ENCODE measurements at regions of chr7 and their contacts with region 1.

Region 1: GRCh38 chr7:131302876-131303707 is 24.6 kb upstream of the MKLN1 start:
- ATAC-seq: peak in 2 of 8 experiments; percentile 23 to 24
- H3K4me3 ChIP-seq: no peak overlapping the region
- H3K27ac ChIP-seq: no peak overlapping the region
- H3K4me1 ChIP-seq: no peaks in the 10 kb centered on the region

Region 2: DNA sequence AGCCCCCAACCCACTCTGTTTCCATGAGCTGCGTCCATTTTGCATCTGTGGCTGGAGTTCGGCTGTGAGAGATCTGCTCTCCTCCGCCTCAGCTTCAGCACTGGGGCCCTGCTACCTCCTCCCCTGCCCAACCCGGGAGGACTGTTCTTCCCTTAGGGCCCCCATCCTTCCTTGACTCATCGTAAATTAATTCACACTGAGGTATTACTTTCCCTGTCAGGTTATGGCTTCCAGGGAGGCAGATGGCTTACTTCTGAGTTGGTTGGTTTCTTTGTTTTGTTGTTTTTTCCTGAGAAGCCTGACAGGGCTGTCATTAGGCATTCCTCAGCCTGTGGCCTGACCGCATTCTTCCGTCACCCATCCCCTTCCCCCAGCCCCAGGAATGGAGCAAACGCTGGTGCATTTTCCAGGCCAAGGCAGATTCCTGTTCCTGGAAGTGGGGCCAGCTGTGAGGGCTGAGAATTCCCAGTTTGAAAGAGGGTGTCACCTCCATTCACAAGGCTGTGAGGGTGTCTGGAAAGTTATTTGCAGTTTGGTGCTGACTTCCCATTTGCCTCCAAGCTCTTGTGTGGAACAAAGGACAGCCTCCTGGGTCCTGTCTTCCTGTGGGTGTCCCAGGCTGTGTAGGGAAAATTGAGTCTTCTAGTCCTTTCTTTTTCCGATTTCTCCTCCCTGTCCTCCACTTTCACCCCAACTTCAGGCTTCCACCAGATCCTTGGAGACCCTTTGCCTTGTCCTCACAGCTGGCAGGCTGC is 946.8 kb before region 1 on chr7:
- in situ Hi-C with region 1: no loop called
- ATAC-seq: peak; percentile 23 to 93 (median 52)
- H3K4me3 ChIP-seq: no peak overlapping the region
- H3K27ac ChIP-seq: peak overlapping the region; percentile 21 to 80
- H3K4me1 ChIP-seq: peaks cover 38 to 41% of the 10 kb centered on the region in 2 donors

Region 3: GRCh38 chr7:131107337-131108211 is 195.5 kb before region 1 on chr7:
- in situ Hi-C with region 1: loop called in 2 of 9 experiments (anchors 25 kb)
- ATAC-seq: peak; percentile 1 to 52 (median 48)
- H3K4me3 ChIP-seq: peak overlapping the region; percentile 49 to 90 (median 60)
- H3K27ac ChIP-seq: peak overlapping the region in 1 of 2 donors; percentile 30
- H3K4me1 ChIP-seq: peaks cover 28% of the 10 kb centered on the region in 2 donors

Region 4: GRCh38 chr7:131753620-131754222 is 450.6 kb after region 1 on chr7:
- in situ Hi-C with region 1: no loop called
- ATAC-seq: peak in 2 of 8 experiments; percentile 16 to 32
- H3K4me3 ChIP-seq: no peak overlapping the region
- H3K27ac ChIP-seq: no peak overlapping the region
- H3K4me1 ChIP-seq: no peaks in the 10 kb centered on the region

Measured in motor neuron (in vitro differentiated cells).